ENCODE measurements at regions of chr6 and their contacts with region 1.

Region 1: GRCh38 chr6:118800394-118801071 is 93.4 kb upstream of the ASF1A start:
- DNase-seq: peak; percentile 92
- ATAC-seq: peak; percentile 95
- H3K4me3 Mint-ChIP-seq: peak overlapping the region; percentile 45
- H3K27ac Mint-ChIP-seq: peak overlapping the region; percentile 81
- H3K4me1 Mint-ChIP-seq: peaks cover 40% of the 10 kb centered on the region
- H3K27me3 Mint-ChIP-seq: no peaks in the 10 kb centered on the region

Region 2: GRCh38 chr6:118284736-118285360 is 515.7 kb before region 1 on chr6:
- CTCF ChIA-PET with region 1: interaction called, 15 read pairs
- POLR2A ChIA-PET with region 1: no interaction called
- DNase-seq: no peak
- ATAC-seq: no peak
- H3K4me3 Mint-ChIP-seq: no peak overlapping the region
- H3K27ac Mint-ChIP-seq: no peak overlapping the region
- H3K4me1 Mint-ChIP-seq: peaks cover 7% of the 10 kb centered on the region
- H3K27me3 Mint-ChIP-seq: peaks cover 21% of the 10 kb centered on the region

Region 3: GRCh38 chr6:118787724-118788423 is 12.7 kb before region 1 on chr6:
- CTCF ChIA-PET with region 1: interaction called, 21 read pairs
- POLR2A ChIA-PET with region 1: interaction called, 3 read pairs
- DNase-seq: no peak
- ATAC-seq: peak; percentile 49
- H3K4me3 Mint-ChIP-seq: no peak overlapping the region
- H3K27ac Mint-ChIP-seq: no peak overlapping the region
- H3K4me1 Mint-ChIP-seq: peaks cover 13% of the 10 kb centered on the region
- H3K27me3 Mint-ChIP-seq: no peaks in the 10 kb centered on the region